Activated naive CD4-positive, alpha-beta T cell treated with anti-CD3 and anti-CD28 coated beads for 36 hours (primary cell): ENCODE measurements at regions of chr5 and their contacts with region 1.

Region 1: DNA sequence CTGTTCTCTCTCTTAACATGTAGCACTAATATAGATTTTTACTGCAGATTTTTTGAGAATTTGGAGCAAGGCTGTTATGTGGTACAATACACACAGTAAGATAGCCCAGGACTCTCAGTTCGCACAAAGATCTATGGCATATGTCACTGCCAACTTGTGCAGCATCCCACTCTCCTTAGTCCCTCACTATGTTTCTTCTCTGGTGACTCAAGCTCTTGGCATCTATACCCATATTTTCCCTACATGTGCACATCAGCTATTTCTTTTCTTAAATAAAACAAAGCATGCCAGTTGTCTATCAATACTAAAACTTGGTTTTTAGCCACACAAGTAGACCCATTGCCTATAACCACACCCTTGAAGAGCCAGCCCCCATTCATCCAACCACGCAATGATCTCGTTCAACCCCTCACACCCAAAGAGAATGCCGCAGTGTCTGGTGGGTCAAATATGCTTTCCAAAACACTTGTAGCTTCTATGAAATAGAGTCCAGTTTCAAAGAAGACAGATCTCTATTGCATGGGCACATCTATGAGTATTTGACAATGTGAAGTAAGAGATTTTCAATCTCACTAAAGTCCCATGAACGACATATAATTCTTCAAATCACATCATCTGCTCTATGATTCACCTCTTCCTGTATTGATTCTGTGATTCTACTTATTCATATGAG is 18.2 kb upstream of the IL7R start:
- DNase-seq: no peak
- H3K4me3 Mint-ChIP-seq: no peak overlapping the region
- H3K27ac Mint-ChIP-seq: peak overlapping the region; percentile 95
- H3K4me1 Mint-ChIP-seq: peaks cover 74% of the 10 kb centered on the region
- H3K27me3 Mint-ChIP-seq: no peaks in the 10 kb centered on the region

Region 2: GRCh38 chr5:35319333-35320002 is 519.0 kb before region 1 on chr5:
- CTCF ChIA-PET with region 1: no interaction called
- intact Hi-C with region 1: loop called (anchors 5 kb)
- DNase-seq: peak; percentile 94
- H3K4me3 Mint-ChIP-seq: no peak overlapping the region
- H3K27ac Mint-ChIP-seq: peak overlapping the region; percentile 24
- H3K4me1 Mint-ChIP-seq: peaks cover 14% of the 10 kb centered on the region
- H3K27me3 Mint-ChIP-seq: peaks cover 24% of the 10 kb centered on the region

Region 3: GRCh38 chr5:35736280-35736679 is 102.2 kb before region 1 on chr5:
- CTCF ChIA-PET with region 1: no interaction called
- intact Hi-C with region 1: loop called (anchors 1 kb)
- DNase-seq: peak; percentile 83
- H3K4me3 Mint-ChIP-seq: no peak overlapping the region
- H3K27ac Mint-ChIP-seq: peak overlapping the region; percentile 73
- H3K4me1 Mint-ChIP-seq: peaks cover 58% of the 10 kb centered on the region
- H3K27me3 Mint-ChIP-seq: no peaks in the 10 kb centered on the region

Region 4: GRCh38 chr5:35799753-35800152 is 38.8 kb before region 1 on chr5:
- CTCF ChIA-PET with region 1: no interaction called
- intact Hi-C with region 1: loop called (anchors 1 kb)
- DNase-seq: no peak
- H3K4me3 Mint-ChIP-seq: no peak overlapping the region
- H3K27ac Mint-ChIP-seq: no peak overlapping the region
- H3K4me1 Mint-ChIP-seq: peaks cover 76% of the 10 kb centered on the region
- H3K27me3 Mint-ChIP-seq: no peaks in the 10 kb centered on the region

Region 5: GRCh38 chr5:35884115-35884788 is 45.7 kb after region 1 on chr5:
- CTCF ChIA-PET with region 1: no interaction called
- intact Hi-C with region 1: loop called (anchors 1 kb)
- DNase-seq: peak; percentile 60
- H3K4me3 Mint-ChIP-seq: peak overlapping the region; percentile 25
- H3K27ac Mint-ChIP-seq: peak overlapping the region; percentile 93
- H3K4me1 Mint-ChIP-seq: peaks cover 49% of the 10 kb centered on the region
- H3K27me3 Mint-ChIP-seq: no peaks in the 10 kb centered on the region